ENCODE measurements at regions of chr18 and their contacts with region 1.

Region 1: DNA sequence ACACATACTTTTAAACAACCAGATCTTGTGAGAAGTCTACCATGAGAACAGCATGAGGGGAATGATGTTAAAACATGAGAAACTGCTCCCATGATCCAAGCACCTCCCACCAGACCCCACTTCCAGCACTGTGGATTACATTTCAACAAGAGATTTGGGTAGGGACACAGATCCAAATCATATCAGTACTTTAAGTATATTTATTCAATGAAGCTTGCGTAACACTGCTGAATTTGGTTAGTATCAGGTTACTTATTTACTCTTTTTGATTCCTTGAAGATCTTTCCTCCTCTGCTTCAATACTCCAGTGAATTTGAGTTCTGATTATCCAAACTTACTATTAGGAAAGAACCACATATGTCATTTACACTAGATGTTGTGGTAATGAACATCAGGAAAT is 418.6 kb downstream of the PIK3C3 start:
- DNase-seq: no peak
- H3K4me3 Mint-ChIP-seq: no peak overlapping the region
- H3K27ac Mint-ChIP-seq: no peak overlapping the region
- H3K4me1 Mint-ChIP-seq: no peaks in the 10 kb centered on the region
- H3K27me3 Mint-ChIP-seq: no peaks in the 10 kb centered on the region

Region 2: GRCh38 chr18:42114310-42114943 is 259.2 kb before region 1 on chr18:
- intact Hi-C with region 1: no loop called
- DNase-seq: peak; percentile 38
- H3K4me3 Mint-ChIP-seq: no peak overlapping the region
- H3K27ac Mint-ChIP-seq: peak overlapping the region; percentile 49
- H3K4me1 Mint-ChIP-seq: peaks cover 15% of the 10 kb centered on the region
- H3K27me3 Mint-ChIP-seq: peaks cover 9% of the 10 kb centered on the region

Region 3: GRCh38 chr18:42392416-42392815 is 18.8 kb after region 1 on chr18:
- intact Hi-C with region 1: loop called (anchors 2 kb)
- DNase-seq: no peak
- H3K4me3 Mint-ChIP-seq: no peak overlapping the region
- H3K27ac Mint-ChIP-seq: no peak overlapping the region
- H3K4me1 Mint-ChIP-seq: no peaks in the 10 kb centered on the region
- H3K27me3 Mint-ChIP-seq: no peaks in the 10 kb centered on the region

Region 4: GRCh38 chr18:42559069-42559690 is 185.6 kb after region 1 on chr18:
- intact Hi-C with region 1: no loop called
- DNase-seq: no peak
- H3K4me3 Mint-ChIP-seq: no peak overlapping the region
- H3K27ac Mint-ChIP-seq: no peak overlapping the region
- H3K4me1 Mint-ChIP-seq: no peaks in the 10 kb centered on the region
- H3K27me3 Mint-ChIP-seq: no peaks in the 10 kb centered on the region

Region 5: GRCh38 chr18:42828881-42829280 is 455.3 kb after region 1 on chr18:
- intact Hi-C with region 1: no loop called
- DNase-seq: no peak
- H3K4me3 Mint-ChIP-seq: no peak overlapping the region
- H3K27ac Mint-ChIP-seq: no peak overlapping the region
- H3K4me1 Mint-ChIP-seq: no peaks in the 10 kb centered on the region
- H3K27me3 Mint-ChIP-seq: no peaks in the 10 kb centered on the region

Measured in activated T-helper 1 cell treated with anti-CD3 and anti-CD28 coated beads, Interleukin-12 subunit alpha, Interleukin-12 subunit beta, Interleukin-2, Interleukin-4 antibody, amounts not matched to agents 30 ng/mL and 10 ng/mL and 1 ng/mL, durations not matched to agents 14 hours and 24 hours and 36 hours (primary cell).